Heart left ventricle (tissue), 16 donors: ENCODE measurements at regions of chr9 and their contacts with region 1.

Region 1: DNA sequence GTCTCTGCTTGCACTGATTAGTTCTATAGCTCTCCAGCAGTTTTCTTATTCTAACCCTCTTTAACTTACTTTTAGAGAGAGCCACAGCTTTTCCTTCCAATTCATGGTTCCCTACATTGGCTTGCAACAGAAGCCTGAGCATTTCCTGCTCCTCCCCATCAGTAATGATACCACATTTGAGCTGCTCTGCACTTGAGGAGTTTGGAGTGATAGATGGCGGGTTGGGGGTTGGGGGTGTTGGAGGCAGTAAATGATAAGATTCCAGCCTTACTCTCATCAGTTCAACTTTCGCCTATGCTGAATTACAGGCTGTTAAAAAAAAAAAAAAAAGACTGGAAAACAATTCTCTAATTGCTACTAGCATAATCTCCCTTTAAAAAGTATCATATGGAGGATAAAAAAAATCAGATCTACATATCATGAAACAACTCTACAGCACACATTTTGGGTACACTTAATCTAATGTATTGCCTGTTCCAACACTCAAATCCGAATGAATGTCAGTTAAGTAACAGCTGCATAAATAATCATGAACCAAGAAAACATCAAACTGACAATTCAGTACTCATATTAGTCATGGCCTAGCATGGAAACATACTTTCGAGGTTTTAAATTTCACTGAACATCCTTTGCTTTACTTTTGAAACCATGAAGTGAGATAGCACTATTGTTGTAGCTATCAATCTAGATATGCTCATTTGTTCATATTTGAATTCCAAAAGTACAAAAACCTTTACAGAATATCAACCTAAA is 224.7 kb downstream of the NFIB start:
- DNase-seq: no peak
- ATAC-seq: peak in 1 of 4 donors; percentile 16
- H3K4me3 ChIP-seq: no peak overlapping the region
- H3K27ac ChIP-seq: no peak overlapping the region
- H3K4me1 ChIP-seq: peaks cover 0 to 34% (median 18%) of the 10 kb centered on the region in 12 donors
- H3K27me3 ChIP-seq: no peaks in the 10 kb centered on the region
- CTCF ChIP-seq: no peak
- POLR2A ChIP-seq: no peak

Region 2: GRCh38 chr9:14043481-14043880 is 45.7 kb before region 1 on chr9:
- intact Hi-C with region 1: loop called in 2 of 10 experiments (anchors 5 to 10 kb)
- DNase-seq: no peak
- ATAC-seq: no peak
- H3K4me3 ChIP-seq: no peak overlapping the region
- H3K27ac ChIP-seq: no peak overlapping the region
- H3K4me1 ChIP-seq: no peaks in the 10 kb centered on the region
- H3K27me3 ChIP-seq: no peaks in the 10 kb centered on the region
- CTCF ChIP-seq: no peak
- POLR2A ChIP-seq: no peak

Region 3: DNA sequence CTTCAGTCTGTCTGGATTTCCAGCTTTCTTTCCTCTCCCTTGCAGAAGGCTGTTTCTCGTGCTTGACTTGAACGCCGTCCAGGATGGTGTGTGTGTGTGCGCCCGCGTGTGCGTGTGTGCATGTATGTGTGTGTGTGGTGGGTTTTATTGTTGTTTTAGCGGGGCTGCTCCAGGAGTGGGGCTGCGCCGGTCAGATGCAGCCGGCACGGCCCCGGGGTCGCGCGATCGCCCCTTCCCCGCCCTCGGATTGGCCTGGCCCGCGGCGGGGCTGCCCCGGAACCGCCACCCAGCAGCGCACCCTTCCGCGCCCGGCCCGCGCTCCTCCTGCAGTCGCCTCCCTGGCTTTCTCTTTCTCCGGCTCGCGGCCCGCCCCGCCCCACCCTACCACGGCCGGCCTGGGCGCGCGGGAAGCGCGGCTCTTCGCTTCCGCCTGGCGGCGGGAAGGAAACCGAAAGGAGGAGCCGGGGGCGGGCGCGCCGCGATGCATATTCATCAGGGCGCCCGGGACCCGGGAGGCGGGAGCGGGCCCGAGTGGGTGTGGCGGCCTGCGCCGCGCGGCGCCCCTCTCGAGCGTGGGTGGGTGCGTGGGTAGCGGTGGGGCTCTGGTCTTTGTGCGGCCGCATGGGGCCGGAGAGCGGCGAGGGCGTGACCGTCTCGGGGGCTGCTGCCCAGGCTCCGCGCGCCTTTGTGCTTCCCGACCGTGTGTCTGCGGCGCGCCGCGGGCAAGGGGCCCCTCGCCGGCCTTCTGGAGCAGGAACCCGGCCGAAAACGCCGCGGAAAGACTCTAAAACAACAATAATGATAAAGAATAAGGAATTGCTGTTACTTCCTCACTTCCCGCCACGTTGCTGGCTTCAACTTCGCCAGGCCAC is 233.2 kb after region 1 on chr9:
- intact Hi-C with region 1: no loop called
- DNase-seq: peak; percentile 94 to 96 (median 95)
- ATAC-seq: peak; percentile 86 to 96 (median 92)
- H3K4me3 ChIP-seq: peak overlapping the region; percentile 65 to 84 (median 78)
- H3K27ac ChIP-seq: peak overlapping the region; percentile 93 to 100 (median 98)
- H3K4me1 ChIP-seq: peaks cover 8 to 82% (median 44%) of the 10 kb centered on the region in 12 donors
- H3K27me3 ChIP-seq: peaks cover 0 to 6% (median 0%) of the 10 kb centered on the region in 9 donors
- CTCF ChIP-seq: peak; percentile 17 to 75 (median 60)
- POLR2A ChIP-seq: peak in 1 of 2 donors; percentile 55

Region 4: DNA sequence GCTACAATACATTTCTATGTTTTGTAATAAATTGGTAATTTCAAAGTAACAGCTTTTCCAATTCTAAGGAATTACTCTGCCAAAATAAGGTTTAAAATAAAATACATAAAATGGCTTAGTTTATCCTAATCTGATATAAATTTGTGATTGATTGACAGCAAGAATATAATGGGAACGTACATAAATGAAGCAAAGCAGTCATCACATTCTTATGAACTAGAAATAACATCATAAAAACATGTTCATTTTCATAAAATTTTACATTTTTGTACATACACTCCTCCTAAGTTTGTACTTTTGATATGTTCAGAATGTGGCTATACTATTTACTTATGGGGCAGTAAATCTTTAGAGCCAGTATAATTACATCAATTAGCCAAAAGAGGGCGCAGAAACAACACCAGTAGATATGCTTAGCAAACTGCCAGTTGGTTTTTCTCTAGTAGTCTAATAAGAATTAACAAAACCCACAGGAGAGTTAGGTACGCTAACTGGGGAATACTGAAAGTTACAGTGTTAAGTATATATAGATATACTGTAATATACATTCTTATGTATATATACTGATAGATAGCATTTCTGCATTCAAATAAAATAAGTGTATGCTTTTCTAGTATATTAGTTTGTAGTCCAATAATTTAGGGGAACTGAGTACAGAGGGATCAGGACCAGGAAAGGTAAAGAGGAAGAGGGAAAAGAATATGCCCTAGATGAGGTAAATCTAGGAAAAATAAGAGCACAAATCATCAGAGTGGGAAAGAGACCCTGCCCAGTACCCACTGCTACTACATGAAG is 527.2 kb after region 1 on chr9:
- intact Hi-C with region 1: no loop called
- DNase-seq: no peak
- ATAC-seq: no peak
- H3K4me3 ChIP-seq: no peak overlapping the region
- H3K27ac ChIP-seq: no peak overlapping the region
- H3K4me1 ChIP-seq: no peaks in the 10 kb centered on the region
- H3K27me3 ChIP-seq: no peaks in the 10 kb centered on the region
- CTCF ChIP-seq: peak; percentile 35 to 74 (median 62)
- POLR2A ChIP-seq: no peak